SK-N-SH (cell line): ENCODE measurements at regions of chr6 and their contacts with region 1.

Region 1: GRCh38 chr6:132830334-132830751 is 16.0 kb downstream of the RPS12 start:
- DNase-seq: peak; percentile 57
- H3K4me3 ChIP-seq: no peak overlapping the region; a peak in 1 of 4 replicates
- H3K27ac ChIP-seq: no peak overlapping the region
- H3K4me1 ChIP-seq: no peaks in the 10 kb centered on the region; a peak in 1 of 4 replicates
- H3K27me3 ChIP-seq: no peaks in the 10 kb centered on the region
- CTCF ChIP-seq: peak; percentile 63
- EP300 ChIP-seq: no peak
- RAD21 ChIP-seq: peak; percentile 94

Region 2: GRCh38 chr6:132814716-132815570 is 15.4 kb before region 1 on chr6:
- CTCF ChIA-PET with region 1: interaction called, 18 read pairs
- POLR2A ChIA-PET with region 1: interaction called, 13 read pairs
- DNase-seq: no peak
- H3K4me3 ChIP-seq: peak overlapping the region; percentile 83 to 93
- H3K27ac ChIP-seq: peak overlapping the region; percentile 48 to 71; a peak in 3 of 4 replicates
- H3K4me1 ChIP-seq: peaks cover 13 to 21% of the 10 kb centered on the region in 2 experiments; a peak in 3 of 4 replicates
- H3K27me3 ChIP-seq: peaks cover 12% of the 10 kb centered on the region; the same call in 1 of the 2 replicates
- CTCF ChIP-seq: no peak
- EP300 ChIP-seq: no peak
- RAD21 ChIP-seq: no peak

Region 3: GRCh38 chr6:133040094-133040802 is 209.9 kb after region 1 on chr6:
- CTCF ChIA-PET with region 1: interaction called, 12 read pairs
- POLR2A ChIA-PET with region 1: no interaction called
- DNase-seq: peak; percentile 21
- H3K4me3 ChIP-seq: no peak overlapping the region
- H3K27ac ChIP-seq: no peak overlapping the region
- H3K4me1 ChIP-seq: peaks cover 0 to 3% of the 10 kb centered on the region in 2 experiments; a peak in 2 of 4 replicates
- H3K27me3 ChIP-seq: no peaks in the 10 kb centered on the region
- CTCF ChIP-seq: peak; percentile 50
- EP300 ChIP-seq: no peak
- RAD21 ChIP-seq: peak; percentile 49

Region 4: DNA sequence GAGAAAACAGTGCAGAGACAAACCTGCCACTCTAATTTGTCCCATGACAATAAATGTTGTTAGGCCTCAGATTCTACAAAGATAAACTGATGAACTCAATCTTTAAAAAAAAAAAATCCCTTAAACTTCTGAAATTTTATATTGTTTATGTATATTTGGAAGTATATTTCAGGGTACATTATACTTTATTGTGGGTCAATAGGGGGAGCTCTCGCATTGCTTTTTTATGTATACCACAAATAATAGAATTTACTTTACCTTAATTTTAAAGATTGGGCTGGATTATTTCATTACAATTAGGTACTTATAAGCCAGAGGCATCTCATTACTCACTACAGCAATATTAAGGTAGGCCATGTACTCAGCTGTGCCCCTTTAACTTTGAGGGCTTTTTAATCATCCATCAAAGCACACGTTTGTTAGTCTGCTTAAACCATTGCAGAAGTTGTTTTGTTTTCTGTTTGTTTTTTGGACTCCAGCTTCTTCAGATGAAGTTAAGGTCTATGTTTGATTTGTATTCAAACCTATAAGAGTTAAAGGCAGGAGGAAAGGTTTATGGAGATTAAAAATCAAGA is 354.5 kb after region 1 on chr6:
- CTCF ChIA-PET with region 1: interaction called, 34 read pairs
- POLR2A ChIA-PET with region 1: no interaction called
- DNase-seq: no peak
- H3K4me3 ChIP-seq: no peak overlapping the region
- H3K27ac ChIP-seq: no peak overlapping the region
- H3K4me1 ChIP-seq: peaks cover 0 to 3% of the 10 kb centered on the region in 2 experiments; a peak in 2 of 4 replicates
- H3K27me3 ChIP-seq: no peaks in the 10 kb centered on the region
- CTCF ChIP-seq: peak; percentile 78
- EP300 ChIP-seq: no peak
- RAD21 ChIP-seq: peak; percentile 65

Region 5: GRCh38 chr6:133466666-133467065 is 636.3 kb after region 1 on chr6:
- CTCF ChIA-PET with region 1: no interaction called
- POLR2A ChIA-PET with region 1: no interaction called
- DNase-seq: no peak
- H3K4me3 ChIP-seq: no peak overlapping the region
- H3K27ac ChIP-seq: no peak overlapping the region
- H3K4me1 ChIP-seq: no peaks in the 10 kb centered on the region
- H3K27me3 ChIP-seq: no peaks in the 10 kb centered on the region
- CTCF ChIP-seq: no peak
- EP300 ChIP-seq: no peak
- RAD21 ChIP-seq: no peak